Naive thymus-derived CD8-positive, alpha-beta T cell (primary cell): ENCODE measurements at regions of chrX and their contacts with region 1.

Region 1: DNA sequence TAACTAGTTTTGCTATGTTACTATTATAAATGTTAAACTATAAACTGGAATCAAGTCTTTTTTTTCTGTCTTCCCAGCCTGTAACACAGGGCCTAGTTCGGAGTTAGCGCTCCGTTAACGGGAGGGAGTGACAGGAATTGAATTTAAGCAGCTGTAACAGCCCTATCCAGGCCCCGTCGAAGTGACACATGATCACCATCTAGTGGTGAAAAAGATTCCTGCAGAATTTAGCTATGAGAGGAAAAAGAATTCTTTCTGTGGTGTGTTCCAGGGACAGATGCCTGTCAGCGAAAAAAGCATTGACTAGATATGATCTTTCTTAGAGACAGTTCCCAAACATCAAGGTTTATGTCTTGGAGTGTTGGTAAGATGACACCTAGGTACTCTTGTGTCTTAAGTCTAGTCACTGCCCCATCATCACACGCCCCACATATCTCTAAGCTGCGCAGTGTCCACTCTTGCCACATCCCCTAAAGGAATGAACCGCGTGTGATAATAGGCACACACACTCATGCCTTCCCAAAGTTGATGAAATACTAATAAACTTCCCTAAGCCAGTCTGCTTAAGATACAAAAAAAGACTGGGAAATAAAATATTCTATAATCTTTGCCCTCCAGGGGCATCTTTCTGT is 2.0 kb downstream of the GAB3 start:
- DNase-seq: peak in 8 of 10 donors; percentile 23 to 76 (median 60)
- ATAC-seq: peak; percentile 57 to 70
- H3K4me3 Mint-ChIP-seq: peak overlapping the region in 9 of 10 donors; percentile 3 to 86 (median 62)
- H3K27ac Mint-ChIP-seq: peak overlapping the region in 6 of 10 donors; percentile 29 to 82 (median 57)
- H3K4me1 Mint-ChIP-seq: peaks cover 0 to 42% (median 16%) of the 10 kb centered on the region in 4 donors
- H3K27me3 Mint-ChIP-seq: no peaks in the 10 kb centered on the region

Region 2: GRCh38 chrX:154649503-154650470 is 99.0 kb before region 1 on chrX:
- POLR2A ChIA-PET with region 1: no interaction called
- DNase-seq: no peak
- ATAC-seq: no peak
- H3K4me3 Mint-ChIP-seq: no peak overlapping the region
- H3K27ac Mint-ChIP-seq: no peak overlapping the region
- H3K4me1 Mint-ChIP-seq: no peaks in the 10 kb centered on the region
- H3K27me3 Mint-ChIP-seq: no peaks in the 10 kb centered on the region

Region 3: GRCh38 chrX:154730253-154730891 is 18.5 kb before region 1 on chrX:
- POLR2A ChIA-PET with region 1: interaction called, 13 read pairs
- DNase-seq: no peak
- ATAC-seq: no peak
- H3K4me3 Mint-ChIP-seq: peak overlapping the region in 3 of 10 donors; percentile 34 to 60 (median 49)
- H3K27ac Mint-ChIP-seq: peak overlapping the region in 7 of 10 donors; percentile 3 to 97 (median 83)
- H3K4me1 Mint-ChIP-seq: peaks cover 31 to 99% (median 86%) of the 10 kb centered on the region in 4 donors
- H3K27me3 Mint-ChIP-seq: no peaks in the 10 kb centered on the region

Region 4: DNA sequence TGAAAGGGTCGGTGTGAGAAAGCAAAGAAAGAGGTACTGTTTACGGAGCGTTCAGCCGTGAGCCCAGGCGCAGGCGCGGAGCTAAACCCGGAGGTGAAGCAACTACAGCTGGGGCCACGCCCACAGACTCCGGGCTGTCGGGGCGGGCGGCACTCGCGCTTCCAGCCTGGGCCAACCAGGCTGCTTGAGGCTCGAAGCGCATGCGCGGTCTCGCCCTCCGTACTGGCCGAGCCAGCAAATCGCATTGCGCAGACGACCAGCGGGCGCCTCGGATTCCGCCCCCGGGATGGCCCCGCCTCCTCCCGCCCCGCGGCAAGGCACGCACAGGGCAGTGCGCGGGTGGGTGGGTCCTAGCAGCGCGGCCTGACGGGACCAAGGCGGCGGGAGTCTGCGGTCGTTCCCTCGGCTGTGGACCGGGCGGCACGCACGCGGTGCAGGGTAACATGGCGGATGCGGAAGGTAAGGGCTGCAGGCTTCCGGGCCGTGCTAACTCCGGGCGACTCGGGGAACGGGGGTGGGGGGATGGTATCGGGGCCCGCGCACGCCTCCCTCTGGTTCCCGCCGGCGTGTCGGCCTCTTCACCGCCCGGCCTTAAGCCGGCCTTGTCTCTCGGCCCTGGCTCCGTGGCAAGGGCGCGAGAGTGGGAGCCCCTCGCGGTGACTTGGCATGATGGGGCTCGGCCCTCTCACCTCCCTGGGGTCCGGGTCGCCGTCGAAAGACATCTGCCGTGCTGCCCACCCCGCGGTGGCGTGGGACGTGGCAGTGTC is 13.9 kb after region 1 on chrX and contains the start of gene DKC1:
- POLR2A ChIA-PET with region 1: interaction called, 43 read pairs
- DNase-seq: peak; percentile 82 to 96 (median 92)
- ATAC-seq: peak; percentile 85 to 87
- H3K4me3 Mint-ChIP-seq: peak within 1 kb of the TSS; percentile 84 to 92 (median 89)
- H3K27ac Mint-ChIP-seq: peak within 1 kb of the TSS; percentile 87 to 97 (median 92)
- H3K4me1 Mint-ChIP-seq: peaks cover 2 to 24% (median 17%) of the 10 kb centered on the region in 4 donors
- H3K27me3 Mint-ChIP-seq: no peaks in the 10 kb centered on the region
- polyA plus RNA-seq, gene DKC1: 38.6 to 56.5 (median 44.2) TPM